Activated CD8-positive, alpha-beta T cell treated with anti-CD3 and anti-CD28 coated beads for 36 hours (primary cell): ENCODE measurements at regions of chr1 and their contacts with region 1.

Region 1: DNA sequence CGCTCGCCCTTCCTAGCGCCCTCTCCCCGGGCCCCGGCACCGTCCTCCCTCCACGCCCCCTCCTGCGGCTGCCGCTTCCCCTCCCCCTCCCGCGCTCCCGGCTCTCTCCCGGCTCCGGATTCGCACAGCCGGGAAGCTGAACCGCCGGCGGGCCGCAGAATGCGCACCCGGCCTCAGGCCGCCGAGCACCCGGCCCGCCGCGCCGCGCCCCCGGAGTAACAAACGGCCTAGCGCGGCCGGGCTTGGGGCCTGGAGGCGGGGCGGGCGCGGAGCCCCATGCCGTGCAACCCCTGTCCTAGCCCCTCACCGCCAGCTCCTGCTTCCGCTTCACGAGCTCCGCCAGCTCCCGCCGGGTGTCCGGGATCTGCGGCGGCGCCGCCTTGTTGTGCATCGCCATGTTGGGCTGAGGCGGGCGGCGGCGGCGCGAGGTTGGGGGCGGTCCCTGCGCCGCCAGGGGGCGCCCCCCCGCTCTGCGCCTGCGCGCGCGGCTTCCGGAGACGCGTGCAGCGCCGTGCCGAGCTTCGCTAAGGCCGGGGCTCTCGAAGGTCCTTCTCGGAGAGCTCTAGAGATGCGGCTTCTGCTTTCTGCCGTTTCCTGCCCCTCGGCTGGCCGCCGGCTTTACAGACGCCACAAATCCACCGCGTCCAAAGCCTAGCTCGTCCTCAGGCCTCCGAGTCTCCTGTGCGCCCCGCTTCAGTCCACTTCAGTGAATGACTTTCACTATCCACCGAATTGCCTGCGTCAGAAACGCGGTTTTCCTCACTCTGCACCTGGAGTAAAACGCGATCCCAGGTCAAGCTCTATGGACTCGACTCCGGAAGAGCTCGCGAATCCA is at the start of gene MEAF6:
- DNase-seq: peak; percentile 84
- ATAC-seq: peak; percentile 91
- H3K4me3 Mint-ChIP-seq: peak within 1 kb of the TSS; percentile 98
- H3K27ac Mint-ChIP-seq: peak within 1 kb of the TSS; percentile 96
- H3K4me1 Mint-ChIP-seq: peaks cover 42% of the 10 kb centered on the region
- H3K27me3 Mint-ChIP-seq: no peaks in the 10 kb centered on the region
- CTCF ChIP-seq: peak; percentile 70
- total RNA-seq, gene MEAF6: 74.0 to 76.3 TPM

Region 2: GRCh38 chr1:37474046-37474759 is 40.4 kb before region 1 on chr1 and contains the start of gene ZC3H12A:
- CTCF ChIA-PET with region 1: interaction called, 6 read pairs
- POLR2A ChIA-PET with region 1: interaction called, 52 read pairs
- intact Hi-C with region 1: no loop called
- DNase-seq: peak; percentile 93
- ATAC-seq: peak; percentile 62
- H3K4me3 Mint-ChIP-seq: peak within 1 kb of the TSS; percentile 90
- H3K27ac Mint-ChIP-seq: peak within 1 kb of the TSS; percentile 99
- H3K4me1 Mint-ChIP-seq: peaks cover 37% of the 10 kb centered on the region
- H3K27me3 Mint-ChIP-seq: no peaks in the 10 kb centered on the region
- CTCF ChIP-seq: no peak
- total RNA-seq, gene ZC3H12A: 20.4 to 20.5 TPM

Region 3: GRCh38 chr1:37553927-37554808 is 39.6 kb after region 1 on chr1 and contains the start of gene SNIP1:
- CTCF ChIA-PET with region 1: interaction called, 4 read pairs
- POLR2A ChIA-PET with region 1: interaction called, 5 read pairs
- intact Hi-C with region 1: loop called (anchors 5 kb)
- DNase-seq: peak; percentile 94
- ATAC-seq: peak; percentile 92
- H3K4me3 Mint-ChIP-seq: peak within 1 kb of the TSS; percentile 85
- H3K27ac Mint-ChIP-seq: peak within 1 kb of the TSS; percentile 91
- H3K4me1 Mint-ChIP-seq: peaks cover 42% of the 10 kb centered on the region
- H3K27me3 Mint-ChIP-seq: peaks cover 2% of the 10 kb centered on the region
- CTCF ChIP-seq: no peak
- total RNA-seq, gene SNIP1: 18.3 to 21.8 TPM